ENCODE measurements at regions of chr15 and their contacts with region 1.

Region 1: GRCh38 chr15:75578948-75579920 is at the start of gene PTPN9:
- DNase-seq: peak; percentile 52 to 79
- ATAC-seq: peak; percentile 80 to 86 (median 83)
- H3K4me3 ChIP-seq: peak within 1 kb of the TSS; percentile 83
- H3K4me3 Mint-ChIP-seq: peak within 1 kb of the TSS; percentile 95
- H3K27ac ChIP-seq: peak within 1 kb of the TSS; percentile 64
- H3K27ac Mint-ChIP-seq: peak within 1 kb of the TSS; percentile 75 to 92
- H3K4me1 ChIP-seq: peaks cover 18% of the 10 kb centered on the region
- H3K4me1 Mint-ChIP-seq: peaks cover 22 to 23% of the 10 kb centered on the region in 2 donors
- H3K27me3 ChIP-seq: no peaks in the 10 kb centered on the region
- H3K27me3 Mint-ChIP-seq: no peaks in the 10 kb centered on the region
- CTCF ChIP-seq: peak; percentile 46
- total RNA-seq, gene PTPN9: 28.3 to 33.0 (median 28.9) TPM

Region 2: DNA sequence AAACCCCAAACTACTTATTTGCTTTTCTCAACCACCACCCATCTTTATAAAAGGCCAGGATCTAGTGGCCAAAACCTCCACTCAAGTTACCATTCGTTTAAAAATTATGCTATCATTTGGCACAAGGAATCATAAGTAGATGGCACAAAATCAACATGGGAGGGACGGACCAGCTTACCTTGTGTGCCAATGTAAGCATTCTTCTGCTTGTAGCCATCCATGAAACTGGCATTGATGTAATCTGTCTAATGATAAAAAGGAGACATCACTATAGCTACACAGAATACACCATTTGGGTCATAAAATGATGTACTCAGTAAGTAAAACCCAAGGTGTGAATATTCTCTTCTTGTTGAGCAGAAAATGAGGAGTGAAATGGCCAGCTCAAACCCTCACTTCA is 99.6 kb before region 1 on chr15:
- intact Hi-C with region 1: no loop called
- DNase-seq: no peak
- ATAC-seq: no peak
- H3K4me3 ChIP-seq: no peak overlapping the region
- H3K4me3 Mint-ChIP-seq: no peak overlapping the region
- H3K27ac ChIP-seq: no peak overlapping the region
- H3K27ac Mint-ChIP-seq: no peak overlapping the region
- H3K4me1 ChIP-seq: no peaks in the 10 kb centered on the region
- H3K4me1 Mint-ChIP-seq: peaks cover 0 to 7% of the 10 kb centered on the region in 2 donors
- H3K27me3 ChIP-seq: no peaks in the 10 kb centered on the region
- H3K27me3 Mint-ChIP-seq: no peaks in the 10 kb centered on the region
- CTCF ChIP-seq: no peak

Region 3: DNA sequence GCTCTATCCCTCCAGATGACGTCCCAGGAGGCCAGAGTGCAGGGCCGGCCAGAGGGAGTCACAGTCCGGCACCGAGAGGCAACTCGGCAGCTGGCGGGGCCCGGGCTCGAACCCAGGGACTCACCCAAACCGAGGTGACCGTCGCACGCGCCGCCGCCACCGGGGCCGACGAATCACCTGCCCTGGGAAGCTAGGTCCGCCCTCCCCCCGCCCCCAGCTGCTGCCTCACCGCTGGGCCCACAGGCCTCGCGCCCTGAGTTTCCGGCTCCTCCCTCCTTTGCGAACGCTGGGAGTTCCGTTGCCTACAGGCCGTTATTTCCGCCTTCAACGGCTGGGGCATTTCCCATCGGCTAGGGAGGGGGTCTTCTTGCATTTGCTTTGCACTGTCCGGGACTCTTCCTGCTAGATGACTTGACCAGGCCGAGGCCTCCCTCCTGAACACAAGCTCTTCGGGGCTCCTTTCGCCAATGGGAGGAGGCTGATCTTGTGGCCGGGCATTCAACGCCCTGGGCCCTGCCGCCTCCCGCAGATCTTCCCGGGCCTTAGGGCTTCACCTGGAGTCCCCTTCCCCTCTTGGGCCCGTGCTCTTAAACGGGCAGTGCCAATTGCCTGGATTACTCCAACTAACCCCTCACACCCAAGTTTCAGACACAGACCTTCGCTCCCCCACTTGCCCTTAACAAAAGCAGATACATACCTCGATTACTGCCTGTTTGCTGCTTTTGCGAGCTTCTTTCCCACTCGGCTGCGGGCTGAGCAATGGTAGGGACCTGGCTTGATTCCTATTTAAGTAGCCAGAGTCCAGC is 46.5 kb after region 1 on chr15 and contains the start of gene SNUPN:
- intact Hi-C with region 1: loop called (anchors 10 kb)
- DNase-seq: peak; percentile 85 to 97
- ATAC-seq: peak; percentile 93 to 98 (median 95)
- H3K4me3 ChIP-seq: peak within 1 kb of the TSS; percentile 100
- H3K4me3 Mint-ChIP-seq: peak within 1 kb of the TSS; percentile 90
- H3K27ac ChIP-seq: peak within 1 kb of the TSS; percentile 93
- H3K27ac Mint-ChIP-seq: peak within 1 kb of the TSS; percentile 98 to 99
- H3K4me1 ChIP-seq: peaks cover 13% of the 10 kb centered on the region
- H3K4me1 Mint-ChIP-seq: peaks cover 19 to 21% of the 10 kb centered on the region in 2 donors
- H3K27me3 ChIP-seq: no peaks in the 10 kb centered on the region
- H3K27me3 Mint-ChIP-seq: no peaks in the 10 kb centered on the region
- CTCF ChIP-seq: no peak
- total RNA-seq, gene SNUPN: 13.8 to 20.7 (median 14.8) TPM

Region 4: DNA sequence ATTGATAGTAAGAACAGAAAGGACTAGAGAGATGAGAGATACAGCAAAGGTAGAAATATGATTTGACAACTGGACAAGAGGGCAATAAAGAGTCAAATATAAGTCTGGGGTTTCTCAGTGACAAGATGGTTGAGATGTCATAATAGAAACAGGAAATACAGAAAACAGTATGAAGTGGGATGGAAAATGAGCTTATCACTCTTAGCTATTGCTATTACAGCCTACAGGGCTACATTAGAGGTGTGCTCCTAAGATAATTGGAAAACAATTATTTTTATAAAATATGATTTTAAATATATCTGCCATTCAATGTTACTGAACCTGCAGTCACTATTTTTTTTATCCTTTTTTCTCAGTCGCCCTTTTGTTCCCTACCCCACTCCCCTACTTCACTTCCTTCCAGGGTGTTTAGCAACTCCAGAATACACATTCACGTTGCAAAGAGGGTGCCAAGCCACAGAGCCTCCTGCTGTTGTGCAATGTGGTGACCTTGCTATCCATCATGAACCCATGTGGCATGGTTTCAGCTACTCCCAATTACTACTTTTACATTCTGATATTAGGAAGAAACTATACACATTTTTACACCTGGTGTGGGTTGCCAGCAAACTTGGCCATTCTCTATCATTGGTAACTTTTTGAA is 427.0 kb after region 1 on chr15:
- intact Hi-C with region 1: no loop called
- DNase-seq: no peak
- ATAC-seq: peak; percentile 36 to 75 (median 44)
- H3K4me3 ChIP-seq: no peak overlapping the region
- H3K4me3 Mint-ChIP-seq: no peak overlapping the region
- H3K27ac ChIP-seq: no peak overlapping the region
- H3K27ac Mint-ChIP-seq: no peak overlapping the region
- H3K4me1 ChIP-seq: no peaks in the 10 kb centered on the region
- H3K4me1 Mint-ChIP-seq: peaks cover 13 to 14% of the 10 kb centered on the region in 2 donors
- H3K27me3 ChIP-seq: peaks cover 2% of the 10 kb centered on the region
- H3K27me3 Mint-ChIP-seq: peaks cover 13 to 29% of the 10 kb centered on the region in 2 donors
- CTCF ChIP-seq: no peak